Mammary epithelial cell (primary cell): ENCODE measurements at regions of chr12 and their contacts with region 1.

Region 1: GRCh38 chr12:39692258-39692853 is 72.8 kb upstream of the ABCD2 start:
- DNase-seq: no peak
- H3K4me3 ChIP-seq: no peak overlapping the region
- H3K27ac ChIP-seq: no peak overlapping the region
- H3K4me1 ChIP-seq: no peaks in the 10 kb centered on the region
- H3K27me3 ChIP-seq: no peaks in the 10 kb centered on the region
- CTCF ChIP-seq: peak; percentile 28 to 34

Region 2: GRCh38 chr12:39319187-39319586 is 373.2 kb before region 1 on chr12:
- CTCF ChIA-PET with region 1: no interaction called
- dilution Hi-C with region 1: no loop called
- in situ Hi-C with region 1: no loop called
- intact Hi-C with region 1: loop called (anchors 2 kb)
- DNase-seq: no peak
- H3K4me3 ChIP-seq: no peak overlapping the region
- H3K27ac ChIP-seq: no peak overlapping the region
- H3K4me1 ChIP-seq: no peaks in the 10 kb centered on the region
- H3K27me3 ChIP-seq: no peaks in the 10 kb centered on the region
- CTCF ChIP-seq: no peak

Region 3: DNA sequence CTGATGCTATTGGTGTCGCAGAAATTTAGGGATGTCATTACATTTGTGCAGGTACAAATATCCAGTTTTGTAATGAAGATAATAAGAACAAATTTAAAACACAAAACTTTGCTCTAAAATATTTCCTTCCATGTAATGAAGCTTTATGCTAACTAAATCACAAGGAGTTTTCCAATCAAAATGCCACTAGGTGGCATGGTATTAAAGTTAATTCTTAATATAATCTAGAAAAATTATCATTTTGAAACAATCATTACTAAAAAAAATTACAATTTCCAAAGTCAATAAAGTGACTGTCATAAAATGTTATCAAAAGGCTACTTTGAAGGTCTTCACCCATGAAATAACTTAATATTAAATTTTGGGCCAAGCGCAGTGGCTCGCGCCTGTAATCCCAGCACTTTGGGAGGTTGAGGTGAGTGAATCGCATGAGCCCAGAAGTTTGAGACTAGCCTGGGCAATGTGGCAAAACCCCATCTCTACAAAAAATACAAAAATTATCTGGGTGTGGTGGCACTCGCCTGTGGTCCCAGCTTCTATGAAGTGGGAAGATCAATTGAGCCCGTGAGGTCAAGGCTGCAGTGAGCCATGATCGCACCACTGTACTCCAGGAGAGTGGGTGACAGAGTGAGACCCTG is 326.9 kb before region 1 on chr12:
- CTCF ChIA-PET with region 1: interaction called, 4 read pairs
- dilution Hi-C with region 1: no loop called
- in situ Hi-C with region 1: no loop called
- intact Hi-C with region 1: loop called (anchors 5 kb)
- DNase-seq: no peak
- H3K4me3 ChIP-seq: no peak overlapping the region
- H3K27ac ChIP-seq: no peak overlapping the region
- H3K4me1 ChIP-seq: no peaks in the 10 kb centered on the region
- H3K27me3 ChIP-seq: no peaks in the 10 kb centered on the region
- CTCF ChIP-seq: peak in 1 of 2 donors; percentile 33

Region 4: GRCh38 chr12:39587225-39587624 is 105.1 kb before region 1 on chr12:
- CTCF ChIA-PET with region 1: no interaction called
- dilution Hi-C with region 1: no loop called
- in situ Hi-C with region 1: no loop called
- intact Hi-C with region 1: loop called (anchors 2 kb)
- DNase-seq: peak; percentile 20
- H3K4me3 ChIP-seq: no peak overlapping the region
- H3K27ac ChIP-seq: no peak overlapping the region
- H3K4me1 ChIP-seq: no peaks in the 10 kb centered on the region
- H3K27me3 ChIP-seq: no peaks in the 10 kb centered on the region
- CTCF ChIP-seq: peak; percentile 48 to 59